Sciatic nerve (tissue), 2 donors: ENCODE measurements at regions of chr3 and their contacts with region 1.

Region 1: DNA sequence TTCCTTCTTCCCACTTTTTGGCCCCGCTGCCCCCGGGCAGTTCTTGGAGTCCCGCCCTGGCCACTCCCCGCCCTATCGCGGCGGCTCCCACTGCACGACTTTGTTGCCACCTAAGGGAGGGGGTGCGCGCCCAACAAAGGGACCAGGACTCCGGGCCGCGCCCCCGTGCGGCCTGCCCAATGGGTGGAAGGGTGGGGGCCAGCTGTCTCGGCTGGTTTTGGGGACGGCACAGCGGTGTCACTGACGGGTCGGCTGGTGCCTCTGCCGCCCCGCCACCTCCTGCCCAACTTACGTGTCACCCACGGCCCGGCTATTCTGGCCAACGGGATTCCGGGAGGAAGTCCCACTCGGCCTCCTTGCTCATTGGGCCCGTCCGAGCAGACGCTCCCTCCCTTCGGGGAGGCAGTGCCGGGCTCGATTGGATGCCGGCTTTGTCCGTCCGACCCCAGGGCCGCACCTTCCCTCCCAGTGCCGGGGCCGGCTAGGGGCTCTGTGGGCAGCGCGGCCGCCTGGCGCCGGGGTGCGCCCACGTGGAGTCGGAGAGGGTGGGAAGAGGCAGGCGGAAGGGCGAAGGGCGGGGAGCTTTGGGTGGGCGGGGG is at the start of gene GOLIM4:
- DNase-seq: peak; percentile 95
- ATAC-seq: peak; percentile 98
- total RNA-seq, gene GOLIM4: 48.9 TPM

Region 2: DNA sequence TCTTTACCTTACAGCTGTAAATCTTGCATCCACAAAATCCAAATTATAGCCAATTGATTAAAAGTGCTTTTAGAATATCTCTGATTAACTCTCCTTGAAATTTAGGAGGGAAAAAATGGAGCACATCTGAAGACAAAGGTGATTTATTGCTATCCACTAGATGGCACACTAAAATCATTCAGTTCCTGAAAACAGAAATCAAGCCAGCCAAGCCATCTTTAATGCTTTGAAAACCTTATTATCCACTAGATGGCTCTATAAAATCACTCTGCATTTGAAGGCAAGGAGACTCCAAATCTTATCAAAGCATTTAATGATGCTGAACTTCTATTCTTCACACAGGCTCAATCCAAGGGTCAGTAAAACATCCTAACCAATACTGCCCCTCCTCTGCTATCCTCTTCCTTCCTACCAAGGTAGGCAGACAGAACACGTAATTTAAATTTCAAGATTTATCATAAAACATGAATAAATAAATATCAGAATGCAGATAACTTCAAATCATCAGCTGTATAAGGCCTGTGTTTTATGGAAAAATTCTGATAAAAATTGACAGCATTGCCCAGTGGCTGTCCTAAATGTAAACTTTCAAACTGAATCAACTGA is 48.4 kb before region 1 on chr3:
- intact Hi-C with region 1: loop called (anchors 10 kb)
- DNase-seq: no peak
- ATAC-seq: peak; percentile 84